CD14-positive monocyte (primary cell): ENCODE measurements at regions of chr19 and their contacts with region 1.

Region 1: GRCh38 chr19:2636897-2637683 is 65.4 kb downstream of the GNG7 start:
- DNase-seq: peak; percentile 50 to 69 (median 64)
- H3K4me3 ChIP-seq: peak overlapping the region in 1 of 3 experiments; percentile 52
- H3K4me3 Mint-ChIP-seq: peak overlapping the region; percentile 64 to 79
- H3K27ac ChIP-seq: no peak overlapping the region
- H3K27ac Mint-ChIP-seq: peak overlapping the region in 3 of 7 donors; percentile 30 to 66 (median 32)
- H3K4me1 ChIP-seq: peaks cover 41 to 59% of the 10 kb centered on the region in 2 donors
- H3K4me1 Mint-ChIP-seq: peaks cover 57% of the 10 kb centered on the region
- H3K27me3 ChIP-seq: no peaks in the 10 kb centered on the region
- H3K27me3 Mint-ChIP-seq: peaks cover 1 to 7% (median 2%) of the 10 kb centered on the region in 3 donors
- CTCF ChIP-seq: peak; percentile 75

Region 2: DNA sequence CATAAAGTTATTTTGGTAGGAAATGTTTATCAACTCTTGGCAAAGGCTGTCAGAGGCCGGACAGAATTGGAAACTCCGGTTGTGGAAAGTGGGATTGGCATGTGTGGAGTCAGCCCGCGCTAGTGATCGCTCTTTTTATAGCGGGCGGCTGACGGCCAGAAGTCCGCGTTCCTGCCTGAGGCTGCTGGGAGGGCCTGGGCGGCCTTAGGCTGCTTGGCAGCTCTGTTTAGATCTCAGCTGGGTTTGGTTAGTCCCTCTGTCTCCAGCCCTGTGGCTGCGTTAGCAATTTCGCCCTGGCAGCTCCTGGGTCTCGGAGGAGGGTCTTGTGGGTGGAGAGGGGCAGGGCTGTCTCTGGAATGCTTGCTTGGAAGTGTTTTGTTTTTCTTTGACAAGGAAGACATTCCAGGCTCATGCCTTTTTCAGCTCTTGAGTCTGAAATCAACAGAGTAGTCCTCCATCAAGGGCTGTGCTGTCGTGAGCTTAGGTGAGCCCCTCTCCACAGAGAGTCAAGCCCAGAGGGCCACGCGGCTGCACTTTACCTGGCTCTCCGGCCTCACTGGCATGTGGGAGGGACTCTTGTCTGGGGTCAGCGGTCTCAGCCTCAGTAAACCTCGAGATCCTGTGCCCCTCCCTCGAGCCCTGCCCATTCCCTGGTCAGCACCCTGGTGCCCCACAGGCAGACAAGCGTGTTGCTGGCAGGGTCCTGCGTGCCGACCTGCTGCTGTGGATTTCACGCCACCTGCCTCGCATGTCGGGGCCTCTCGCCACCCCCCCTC is 450.8 kb before region 1 on chr19:
- intact Hi-C with region 1: no loop called
- DNase-seq: no peak
- H3K4me3 ChIP-seq: no peak overlapping the region
- H3K4me3 Mint-ChIP-seq: no peak overlapping the region
- H3K27ac ChIP-seq: no peak overlapping the region
- H3K27ac Mint-ChIP-seq: peak overlapping the region in 4 of 7 donors; percentile 35 to 92 (median 66)
- H3K4me1 ChIP-seq: peaks cover 21 to 26% of the 10 kb centered on the region in 2 donors
- H3K4me1 Mint-ChIP-seq: peaks cover 24% of the 10 kb centered on the region
- H3K27me3 ChIP-seq: no peaks in the 10 kb centered on the region
- H3K27me3 Mint-ChIP-seq: peaks cover 0 to 4% (median 2%) of the 10 kb centered on the region in 3 donors
- CTCF ChIP-seq: no peak

Region 3: DNA sequence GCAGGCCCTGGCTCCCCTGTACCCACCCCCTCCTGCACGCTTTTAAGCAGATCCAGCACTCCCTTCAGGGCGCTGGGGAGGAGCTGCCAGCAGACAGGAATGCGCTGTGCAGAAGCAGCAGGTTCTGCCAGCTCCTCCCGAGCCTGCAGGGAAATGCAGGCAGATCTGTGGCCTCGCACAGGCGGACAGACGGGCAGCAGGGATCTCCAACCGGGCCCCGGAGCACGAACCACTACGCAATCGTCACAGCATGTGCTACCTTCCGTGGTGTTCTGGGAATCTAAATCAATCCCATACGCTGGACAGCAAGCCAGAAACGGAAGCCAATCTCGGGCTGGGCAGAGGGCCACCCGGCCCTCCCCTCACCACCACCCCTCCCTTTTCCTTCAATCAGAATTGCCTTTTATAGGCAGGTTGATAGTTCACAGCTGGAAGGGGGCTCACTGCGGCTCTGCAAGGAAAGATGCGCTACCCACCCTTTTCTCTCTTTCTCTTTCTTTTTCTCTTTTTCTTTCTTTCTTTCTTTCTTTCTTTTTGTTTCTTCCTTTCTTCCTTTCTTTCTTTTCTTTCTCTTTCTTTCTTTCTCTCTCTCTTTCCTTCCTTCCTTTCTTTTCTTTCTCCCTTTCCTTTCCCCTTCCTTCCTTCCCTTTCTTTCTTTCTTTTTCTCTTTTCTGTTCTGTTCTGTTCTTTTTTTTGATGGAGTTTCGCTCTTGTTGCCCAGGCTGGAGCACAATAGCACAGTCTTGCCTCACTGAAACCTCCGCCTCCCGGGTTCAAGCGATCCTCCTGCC is 34.5 kb before region 1 on chr19:
- intact Hi-C with region 1: loop called (anchors 5 kb)
- DNase-seq: no peak
- H3K4me3 ChIP-seq: no peak overlapping the region
- H3K4me3 Mint-ChIP-seq: no peak overlapping the region
- H3K27ac ChIP-seq: no peak overlapping the region
- H3K27ac Mint-ChIP-seq: no peak overlapping the region
- H3K4me1 ChIP-seq: peaks cover 10 to 13% of the 10 kb centered on the region in 2 donors
- H3K4me1 Mint-ChIP-seq: peaks cover 8% of the 10 kb centered on the region
- H3K27me3 ChIP-seq: no peaks in the 10 kb centered on the region
- H3K27me3 Mint-ChIP-seq: peaks cover 0 to 2% (median 0%) of the 10 kb centered on the region in 3 donors
- CTCF ChIP-seq: no peak